ENCODE measurements at regions of chr1 and their contacts with region 1.

Region 1: GRCh38 chr1:145720877-145721671 is 1.8 kb downstream of the CD160 start:
- DNase-seq: no peak
- ATAC-seq: peak; percentile 98
- H3K4me3 ChIP-seq: peak overlapping the region; percentile 41; the same call in 1 of the 2 replicates
- H3K27ac ChIP-seq: no peak overlapping the region
- H3K4me1 ChIP-seq: peaks cover 16% of the 10 kb centered on the region
- H3K27me3 ChIP-seq: no peaks in the 10 kb centered on the region
- CTCF ChIP-seq: peak; percentile 79 to 91 (median 90); a peak in 5 of 6 replicates
- EP300 ChIP-seq: no peak
- POLR2A ChIP-seq: no peak
- RAD21 ChIP-seq: peak; percentile 67

Region 2: GRCh38 chr1:145690624-145691035 is 30.4 kb before region 1 on chr1:
- CTCF ChIA-PET with region 1: interaction called, 14 read pairs
- POLR2A ChIA-PET with region 1: no interaction called
- RAD21 ChIA-PET with region 1: interaction called, 5 read pairs
- SMC1A ChIA-PET with region 1: interaction called, 17 read pairs
- in situ Hi-C with region 1: no loop called
- intact Hi-C with region 1: no loop called
- DNase-seq: peak; percentile 51
- ATAC-seq: peak; percentile 97
- H3K4me3 ChIP-seq: no peak overlapping the region
- H3K27ac ChIP-seq: peak overlapping the region; percentile 51; the same call in 1 of the 2 replicates
- H3K4me1 ChIP-seq: peaks cover 15% of the 10 kb centered on the region
- H3K27me3 ChIP-seq: no peaks in the 10 kb centered on the region
- CTCF ChIP-seq: no peak
- EP300 ChIP-seq: no peak
- POLR2A ChIP-seq: no peak
- RAD21 ChIP-seq: no peak

Region 3: DNA sequence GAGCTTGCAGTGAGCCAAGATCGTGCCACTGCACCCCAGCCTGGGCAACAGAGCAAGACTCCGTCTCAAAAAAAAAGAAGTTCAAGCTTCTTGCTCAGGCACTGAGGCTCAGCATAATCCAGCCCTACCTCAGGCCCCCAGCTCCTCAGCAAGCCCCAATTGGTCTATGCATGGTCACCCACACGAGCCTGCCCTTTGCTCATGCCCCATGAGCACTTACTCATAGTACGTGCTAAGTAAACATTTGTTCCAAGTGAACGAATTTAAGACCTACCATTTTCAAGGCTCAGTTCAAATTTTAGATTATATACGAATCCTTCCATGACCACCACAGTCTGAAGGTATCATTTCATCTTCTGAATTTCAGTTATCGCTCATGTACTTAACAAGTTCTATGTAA is 18.2 kb before region 1 on chr1:
- CTCF ChIA-PET with region 1: interaction called, 13 read pairs
- POLR2A ChIA-PET with region 1: no interaction called
- RAD21 ChIA-PET with region 1: no interaction called
- SMC1A ChIA-PET with region 1: no interaction called
- in situ Hi-C with region 1: no loop called
- intact Hi-C with region 1: no loop called
- DNase-seq: no peak
- ATAC-seq: no peak
- H3K4me3 ChIP-seq: no peak overlapping the region
- H3K27ac ChIP-seq: no peak overlapping the region
- H3K4me1 ChIP-seq: no peaks in the 10 kb centered on the region
- H3K27me3 ChIP-seq: no peaks in the 10 kb centered on the region
- CTCF ChIP-seq: no peak
- EP300 ChIP-seq: no peak
- POLR2A ChIP-seq: no peak
- RAD21 ChIP-seq: no peak